ENCODE measurements at regions of chr11 and their contacts with region 1.

Region 1: DNA sequence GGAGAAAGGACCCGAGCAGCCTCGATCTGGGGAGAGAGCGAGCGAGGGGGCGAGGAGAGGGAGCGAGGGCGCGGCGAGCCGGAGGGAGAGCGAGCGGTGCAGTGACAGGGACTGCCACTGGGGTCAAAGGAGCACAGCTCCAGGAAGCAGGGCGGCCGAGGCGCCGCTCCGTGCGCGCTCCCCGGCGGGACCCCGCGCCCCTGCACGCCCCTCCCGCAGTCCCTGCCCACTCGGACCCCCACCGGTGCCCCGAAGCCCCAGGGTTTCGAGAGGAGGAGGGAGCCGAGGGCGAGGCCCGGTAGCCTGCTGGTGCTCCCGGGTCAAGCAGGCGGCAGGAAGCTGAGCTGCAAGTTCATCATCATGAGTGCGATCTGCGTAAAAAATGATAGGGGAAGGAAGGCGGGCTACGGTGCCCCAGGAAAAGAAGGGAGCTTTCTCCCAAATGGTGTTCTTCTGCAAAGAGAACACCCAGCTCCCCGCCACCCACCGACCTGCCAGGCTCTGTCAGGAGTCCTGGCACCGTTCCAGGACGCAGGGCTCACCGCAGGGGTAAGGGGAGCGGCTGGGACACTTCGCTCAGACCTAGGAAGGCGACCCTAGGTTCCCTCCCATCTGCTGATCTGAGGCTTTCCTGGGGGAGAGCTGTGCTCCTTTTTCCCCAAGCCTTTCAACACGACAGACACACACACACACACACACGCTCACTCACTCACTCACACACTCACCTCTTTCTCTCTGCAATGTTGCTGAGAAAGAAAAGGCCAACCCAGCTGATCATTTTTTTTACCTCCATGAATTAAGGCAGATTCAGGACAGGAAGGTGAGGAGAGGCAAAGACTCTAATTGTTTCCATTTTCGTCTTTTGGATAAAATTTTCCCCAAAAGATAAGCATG is at the start of gene MPPED2:
- DNase-seq: peak; percentile 45
- H3K4me3 ChIP-seq: peak within 1 kb of the TSS; percentile 84 to 88
- H3K27ac ChIP-seq: peak within 1 kb of the TSS; percentile 94 to 96
- H3K4me1 ChIP-seq: no peaks in the 10 kb centered on the region
- H3K27me3 ChIP-seq: no peaks in the 10 kb centered on the region
- CTCF ChIP-seq: peak in 3 of 4 experiments; percentile 17 to 60 (median 55)
- POLR2A ChIP-seq: no peak
- total RNA-seq, gene MPPED2: 28.4 to 34.9 TPM

Region 2: DNA sequence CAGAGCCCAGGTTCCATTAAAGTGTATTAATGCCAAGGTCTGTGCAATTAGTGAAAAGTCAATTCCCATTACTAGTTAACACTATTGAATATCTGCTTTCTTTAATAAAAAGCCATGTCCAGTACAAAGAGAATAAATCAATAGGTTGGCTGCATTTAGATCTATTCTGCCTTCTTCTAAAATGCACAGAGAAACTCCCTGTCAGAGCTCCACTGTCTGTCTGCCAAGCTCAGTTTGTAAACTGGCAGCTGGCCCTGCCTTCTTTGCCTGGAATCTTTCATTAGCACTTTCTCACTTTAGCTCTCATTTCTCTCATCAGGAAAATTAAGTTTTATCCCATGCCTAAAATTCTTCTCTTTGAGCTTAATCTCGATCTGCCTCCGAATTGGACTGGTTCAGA is 228.0 kb before region 1 on chr11:
- intact Hi-C with region 1: loop called (anchors 10 kb)
- DNase-seq: no peak
- H3K4me3 ChIP-seq: no peak overlapping the region
- H3K27ac ChIP-seq: peak overlapping the region in 1 of 2 donors; percentile 3
- H3K4me1 ChIP-seq: no peaks in the 10 kb centered on the region
- H3K27me3 ChIP-seq: no peaks in the 10 kb centered on the region
- CTCF ChIP-seq: no peak
- POLR2A ChIP-seq: no peak

Region 3: DNA sequence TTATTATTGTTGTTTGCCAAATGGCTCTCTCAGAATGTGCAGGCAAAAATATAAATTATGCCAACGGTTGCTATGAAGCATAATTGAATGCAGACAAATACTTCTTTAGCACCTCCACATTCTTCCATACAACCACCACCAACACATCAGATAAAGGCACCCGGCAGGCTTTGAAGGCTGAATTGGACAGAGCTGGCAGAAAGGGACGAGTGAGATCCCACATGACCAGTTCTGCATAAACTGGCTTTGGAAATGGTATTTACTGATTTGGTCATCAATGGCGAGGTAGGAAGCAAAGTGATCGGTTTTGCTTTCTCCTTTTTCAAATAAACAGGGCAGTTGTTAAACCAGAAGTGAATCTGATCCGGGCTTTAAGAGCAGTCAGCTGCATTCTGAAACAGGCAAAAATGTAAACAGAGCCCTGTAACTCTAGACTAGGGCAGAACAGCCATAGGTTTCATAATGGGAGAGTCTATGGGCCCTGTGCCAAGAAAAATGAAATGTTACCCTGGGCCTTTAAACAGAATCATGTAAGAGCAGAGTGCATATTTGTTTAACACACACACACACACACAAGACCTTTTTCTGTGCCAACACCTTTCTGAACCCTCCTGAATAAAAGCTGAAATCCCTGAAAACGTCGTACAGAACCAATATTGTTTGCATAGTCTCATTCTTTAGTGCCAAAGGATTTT is 98.0 kb before region 1 on chr11:
- intact Hi-C with region 1: loop called (anchors 10 kb)
- DNase-seq: peak; percentile 85
- H3K4me3 ChIP-seq: peak overlapping the region; percentile 11 to 23
- H3K27ac ChIP-seq: peak overlapping the region; percentile 70 to 83
- H3K4me1 ChIP-seq: peaks cover 13% of the 10 kb centered on the region
- H3K27me3 ChIP-seq: no peaks in the 10 kb centered on the region
- CTCF ChIP-seq: no peak
- POLR2A ChIP-seq: no peak

Region 4: DNA sequence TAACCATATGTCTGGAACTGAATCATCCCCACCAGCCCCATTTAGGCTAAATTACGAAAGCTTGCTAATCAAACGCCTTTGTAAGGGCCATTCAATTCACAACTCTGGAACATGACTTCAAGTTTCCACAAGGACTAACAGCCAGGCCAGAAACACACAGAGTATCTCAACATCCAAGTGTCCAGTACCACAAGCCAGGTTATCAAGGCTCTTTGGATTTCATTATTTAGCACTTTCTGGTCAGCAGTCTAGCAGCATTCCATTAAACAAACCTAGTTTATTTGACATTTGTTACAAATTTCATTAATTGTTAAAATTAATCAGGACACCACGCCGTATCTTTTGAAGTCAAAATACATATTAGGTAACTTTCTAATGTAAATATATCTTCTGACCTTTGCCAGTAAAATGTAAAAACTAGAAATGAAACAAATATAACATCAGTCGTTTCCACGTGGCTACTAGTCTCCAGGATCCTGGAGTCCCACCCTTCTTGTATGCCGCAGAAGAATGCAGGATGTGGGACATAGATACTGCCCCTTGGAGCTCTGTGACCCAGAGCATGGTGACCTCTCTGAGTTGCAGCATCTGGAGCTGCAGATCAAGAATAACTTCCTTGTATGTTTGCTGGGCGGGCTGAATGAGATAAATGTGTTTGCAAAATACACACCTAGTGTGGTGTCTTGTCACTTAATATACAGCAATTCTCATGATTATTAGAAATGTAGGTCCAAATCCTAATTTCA is 65.0 kb before region 1 on chr11:
- intact Hi-C with region 1: no loop called
- DNase-seq: no peak
- H3K4me3 ChIP-seq: no peak overlapping the region
- H3K27ac ChIP-seq: no peak overlapping the region
- H3K4me1 ChIP-seq: peaks cover 10% of the 10 kb centered on the region
- H3K27me3 ChIP-seq: no peaks in the 10 kb centered on the region
- CTCF ChIP-seq: no peak
- POLR2A ChIP-seq: no peak

Measured in prostate gland (tissue), 2 donors.